Pancreas (tissue), 10 donors: ENCODE measurements at regions of chr15 and their contacts with region 1.

Region 1: GRCh38 chr15:58852347-58852746 is 81.1 kb downstream of the SLTM start:
- DNase-seq: no peak
- ATAC-seq: no peak
- H3K4me3 ChIP-seq: no peak overlapping the region
- H3K27ac ChIP-seq: no peak overlapping the region
- H3K4me1 ChIP-seq: peaks cover 0 to 10% (median 0%) of the 10 kb centered on the region in 3 donors
- H3K27me3 ChIP-seq: no peaks in the 10 kb centered on the region
- CTCF ChIP-seq: no peak

Region 2: DNA sequence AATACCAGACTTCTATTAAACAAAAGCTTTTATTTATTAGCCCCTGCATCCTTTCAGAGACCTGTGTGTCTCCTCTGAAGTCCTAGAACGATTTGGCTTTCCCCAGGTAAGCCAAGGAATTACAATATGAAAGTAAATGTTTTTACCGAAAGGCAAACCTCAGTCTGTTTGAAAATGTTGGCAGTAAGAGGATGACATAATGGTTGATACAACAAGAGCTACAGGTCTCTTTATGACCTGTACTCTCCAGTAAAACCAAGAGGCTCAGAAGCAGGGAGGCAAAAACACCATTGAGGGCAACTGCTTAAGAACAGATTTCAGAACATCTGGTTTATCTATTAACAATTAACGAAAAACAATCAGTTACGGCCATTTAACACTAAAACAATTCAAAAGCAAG is 210.7 kb before region 1 on chr15:
- intact Hi-C with region 1: loop called in 1 of 3 experiments (anchors 5 kb)
- DNase-seq: no peak
- ATAC-seq: peak in 1 of 4 donors; percentile 63
- H3K4me3 ChIP-seq: no peak overlapping the region
- H3K27ac ChIP-seq: no peak overlapping the region
- H3K4me1 ChIP-seq: no peaks in the 10 kb centered on the region
- H3K27me3 ChIP-seq: no peaks in the 10 kb centered on the region
- CTCF ChIP-seq: no peak

Region 3: DNA sequence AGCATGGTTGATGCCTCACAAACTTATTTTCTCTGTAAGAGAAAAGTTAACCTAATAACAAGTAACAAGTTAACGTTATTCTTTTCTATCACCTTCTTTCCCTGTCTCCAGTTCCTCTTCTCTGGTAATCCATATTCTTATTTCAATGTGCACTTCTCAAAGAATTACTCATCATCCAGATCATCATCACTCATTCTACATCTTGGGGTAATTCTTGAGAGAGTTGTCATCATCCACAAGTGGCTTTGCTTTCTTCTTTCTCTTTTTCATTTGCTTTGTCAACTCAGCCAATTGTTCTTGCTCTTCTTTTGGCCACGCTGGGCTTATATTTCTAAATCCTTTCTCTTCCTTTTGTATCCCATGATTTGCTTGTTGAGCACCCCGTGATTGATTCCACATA is 114.4 kb after region 1 on chr15:
- intact Hi-C with region 1: no loop called
- DNase-seq: no peak
- ATAC-seq: no peak
- H3K4me3 ChIP-seq: no peak overlapping the region
- H3K27ac ChIP-seq: no peak overlapping the region
- H3K4me1 ChIP-seq: no peaks in the 10 kb centered on the region
- H3K27me3 ChIP-seq: no peaks in the 10 kb centered on the region
- CTCF ChIP-seq: no peak

Region 4: GRCh38 chr15:59039225-59039624 is 186.9 kb after region 1 on chr15:
- intact Hi-C with region 1: no loop called
- DNase-seq: no peak
- ATAC-seq: no peak
- H3K4me3 ChIP-seq: no peak overlapping the region
- H3K27ac ChIP-seq: no peak overlapping the region
- H3K4me1 ChIP-seq: no peaks in the 10 kb centered on the region
- H3K27me3 ChIP-seq: no peaks in the 10 kb centered on the region
- CTCF ChIP-seq: no peak

Region 5: DNA sequence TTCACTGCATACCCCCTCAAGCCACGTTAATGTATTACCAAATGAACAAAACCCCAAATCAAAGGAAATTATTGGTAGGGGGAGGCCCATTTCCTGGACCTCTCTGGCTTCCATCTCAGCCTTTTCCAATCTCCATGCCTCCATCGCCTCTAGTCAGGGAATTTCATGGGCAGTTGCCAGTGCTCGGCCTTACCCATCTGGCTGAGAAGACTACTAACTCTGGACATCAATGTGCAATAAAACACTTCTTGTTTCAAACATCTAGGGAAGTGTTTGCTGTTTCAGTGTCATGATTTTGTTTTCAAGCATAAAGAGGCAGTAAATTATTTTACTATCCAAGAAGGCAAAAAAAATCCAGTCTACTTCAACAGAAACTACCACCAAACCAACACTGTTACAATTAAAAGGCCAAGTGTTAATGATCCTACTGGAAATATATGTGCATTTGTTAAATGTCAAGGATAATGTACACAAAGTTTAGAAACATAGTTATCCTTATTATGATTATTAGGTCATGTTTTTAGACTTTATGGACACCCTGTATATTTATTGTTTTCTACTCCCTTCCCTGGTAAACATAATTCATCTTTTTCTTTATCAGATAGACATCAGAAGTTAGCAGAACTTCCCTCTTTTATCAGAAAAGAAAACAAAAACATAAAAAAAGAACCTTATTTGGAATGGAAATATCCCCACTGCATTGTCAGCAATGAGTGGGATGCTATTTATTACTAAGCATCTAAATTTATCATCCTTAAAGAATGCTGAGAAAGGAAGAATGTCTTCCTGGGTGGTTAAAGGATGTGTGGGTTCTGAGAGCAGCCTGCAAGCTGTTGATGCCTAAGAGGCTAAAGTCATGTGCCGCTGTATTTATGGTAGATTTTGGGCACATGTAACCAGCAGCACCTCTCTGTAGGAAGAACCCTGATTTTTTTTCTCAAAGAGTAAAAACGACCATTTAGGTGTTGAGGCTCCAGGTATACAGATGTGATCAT is 369.5 kb after region 1 on chr15:
- intact Hi-C with region 1: no loop called
- DNase-seq: no peak
- ATAC-seq: peak in 1 of 4 donors; percentile 66
- H3K4me3 ChIP-seq: no peak overlapping the region
- H3K27ac ChIP-seq: no peak overlapping the region
- H3K4me1 ChIP-seq: no peaks in the 10 kb centered on the region
- H3K27me3 ChIP-seq: no peaks in the 10 kb centered on the region
- CTCF ChIP-seq: no peak